ENCODE measurements at regions of chr3 and their contacts with region 1.

Region 1: DNA sequence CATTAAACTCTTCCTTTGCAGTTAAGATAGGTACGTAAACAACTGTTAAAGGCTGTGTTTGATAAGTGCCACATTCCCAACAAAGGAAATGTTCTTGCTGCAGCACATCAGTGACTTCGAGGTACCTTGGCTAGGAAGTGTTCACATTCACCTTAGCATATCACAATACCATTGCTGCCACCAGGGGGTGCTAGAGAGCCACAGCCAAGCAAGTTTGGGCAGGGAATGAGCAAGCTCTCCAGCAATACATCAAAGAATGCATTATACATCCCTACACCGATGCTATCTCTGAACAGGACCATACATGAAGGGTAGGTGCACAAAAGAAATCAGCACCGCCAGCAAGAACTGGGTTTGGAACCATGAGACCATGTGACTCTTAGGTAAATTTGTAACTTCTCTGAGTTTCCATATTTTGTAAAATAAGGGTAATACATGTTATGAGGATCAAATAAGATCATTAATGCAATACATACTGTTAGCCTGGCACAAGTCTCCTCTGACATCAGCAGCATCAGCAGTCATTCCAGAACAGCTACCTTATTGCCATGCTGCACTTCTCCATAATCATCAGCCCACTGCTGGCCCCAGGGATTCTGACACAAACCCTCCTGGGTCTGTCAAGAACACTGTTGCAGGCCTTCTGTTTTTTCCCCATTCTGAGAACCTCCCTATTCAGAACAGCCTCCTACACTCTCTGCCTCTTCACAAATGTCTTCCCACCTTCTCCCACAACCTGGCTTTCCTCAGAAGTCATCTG is 37.6 kb downstream of the RYK start:
- DNase-seq: peak; percentile 52 to 97 (median 83)
- ATAC-seq: peak; percentile 90 to 97 (median 94)
- H3K4me3 ChIP-seq: no peak overlapping the region
- H3K27ac ChIP-seq: no peak overlapping the region
- H3K4me1 ChIP-seq: no peaks in the 10 kb centered on the region
- H3K27me3 ChIP-seq: no peaks in the 10 kb centered on the region
- CTCF ChIP-seq: peak; percentile 87 to 98 (median 96)

Region 2: GRCh38 chr3:133927540-133928066 is 285.5 kb before region 1 on chr3:
- intact Hi-C with region 1: loop called in 1 of 3 experiments (anchors 10 kb)
- DNase-seq: peak in 5 of 6 donors; percentile 37 to 90 (median 52)
- ATAC-seq: peak; percentile 88 to 93 (median 90)
- H3K4me3 ChIP-seq: peak overlapping the region; percentile 34 to 69 (median 56)
- H3K27ac ChIP-seq: no peak overlapping the region
- H3K4me1 ChIP-seq: peaks cover 0 to 3% (median 0%) of the 10 kb centered on the region in 3 donors
- H3K27me3 ChIP-seq: no peaks in the 10 kb centered on the region
- CTCF ChIP-seq: peak; percentile 61 to 80 (median 74)

Region 3: GRCh38 chr3:134299185-134299887 is 86.2 kb after region 1 on chr3:
- intact Hi-C with region 1: loop called in 2 of 3 experiments (anchors 5 to 10 kb)
- DNase-seq: no peak
- ATAC-seq: peak; percentile 58 to 77 (median 74)
- H3K4me3 ChIP-seq: no peak overlapping the region
- H3K27ac ChIP-seq: no peak overlapping the region
- H3K4me1 ChIP-seq: peaks cover 0 to 4% (median 0%) of the 10 kb centered on the region in 3 donors
- H3K27me3 ChIP-seq: no peaks in the 10 kb centered on the region
- CTCF ChIP-seq: no peak

Region 4: DNA sequence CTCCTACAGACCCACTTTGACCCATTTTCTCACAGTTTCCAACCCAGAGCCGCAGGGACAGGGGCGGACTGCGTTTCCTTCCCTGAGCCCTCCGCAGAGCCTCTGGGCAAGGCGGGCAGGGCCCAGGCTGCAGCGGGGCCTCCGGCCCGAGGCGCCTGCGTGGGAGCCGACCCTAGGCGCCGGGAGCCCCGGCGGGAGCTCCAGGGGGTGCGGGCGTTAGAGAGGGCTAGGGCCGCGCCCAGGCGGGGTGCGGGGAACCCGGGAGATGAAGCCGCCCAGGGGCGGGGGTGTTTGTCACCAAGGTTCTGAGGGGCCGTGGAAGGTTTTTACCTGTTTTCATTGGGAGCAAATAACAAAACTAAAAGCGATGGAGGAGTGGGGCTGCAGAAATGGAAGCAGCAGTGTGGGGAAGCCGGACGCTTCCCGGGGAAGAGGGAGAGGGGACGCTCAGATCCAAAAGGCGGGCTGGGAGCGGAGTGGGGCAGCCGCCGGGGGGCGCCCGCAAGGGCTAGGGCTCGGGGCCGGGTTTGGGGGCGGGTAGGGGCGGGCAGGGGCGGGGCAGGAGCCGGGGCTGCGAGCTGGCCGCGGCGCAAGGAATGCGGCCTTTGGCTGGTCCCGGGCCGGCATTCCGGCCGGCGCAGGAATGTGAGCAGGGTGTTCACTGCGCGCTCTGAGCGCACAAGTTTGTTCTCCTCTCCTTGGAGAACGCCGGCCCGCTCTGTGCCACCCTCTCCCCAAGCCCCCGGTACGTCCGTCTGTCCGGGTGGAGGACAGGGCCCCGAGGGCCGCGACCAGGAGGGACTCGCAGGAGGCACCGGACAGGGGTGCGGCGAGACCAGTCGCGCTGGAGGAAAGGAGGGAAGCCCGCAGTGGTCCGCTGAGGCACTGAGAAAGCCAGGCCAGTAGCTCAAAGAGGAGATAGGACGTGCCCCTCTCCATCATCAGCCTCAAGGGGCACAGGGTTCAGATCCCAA is 100.1 kb after region 1 on chr3:
- intact Hi-C with region 1: no loop called
- DNase-seq: peak; percentile 59 to 88 (median 74)
- ATAC-seq: peak; percentile 69 to 73 (median 69)
- H3K4me3 ChIP-seq: peak overlapping the region; percentile 13 to 47 (median 34)
- H3K27ac ChIP-seq: peak overlapping the region; percentile 71 to 87 (median 81)
- H3K4me1 ChIP-seq: peaks cover 0 to 13% (median 8%) of the 10 kb centered on the region in 3 donors
- H3K27me3 ChIP-seq: no peaks in the 10 kb centered on the region
- CTCF ChIP-seq: peak in 1 of 4 donors; percentile 17

Region 5: DNA sequence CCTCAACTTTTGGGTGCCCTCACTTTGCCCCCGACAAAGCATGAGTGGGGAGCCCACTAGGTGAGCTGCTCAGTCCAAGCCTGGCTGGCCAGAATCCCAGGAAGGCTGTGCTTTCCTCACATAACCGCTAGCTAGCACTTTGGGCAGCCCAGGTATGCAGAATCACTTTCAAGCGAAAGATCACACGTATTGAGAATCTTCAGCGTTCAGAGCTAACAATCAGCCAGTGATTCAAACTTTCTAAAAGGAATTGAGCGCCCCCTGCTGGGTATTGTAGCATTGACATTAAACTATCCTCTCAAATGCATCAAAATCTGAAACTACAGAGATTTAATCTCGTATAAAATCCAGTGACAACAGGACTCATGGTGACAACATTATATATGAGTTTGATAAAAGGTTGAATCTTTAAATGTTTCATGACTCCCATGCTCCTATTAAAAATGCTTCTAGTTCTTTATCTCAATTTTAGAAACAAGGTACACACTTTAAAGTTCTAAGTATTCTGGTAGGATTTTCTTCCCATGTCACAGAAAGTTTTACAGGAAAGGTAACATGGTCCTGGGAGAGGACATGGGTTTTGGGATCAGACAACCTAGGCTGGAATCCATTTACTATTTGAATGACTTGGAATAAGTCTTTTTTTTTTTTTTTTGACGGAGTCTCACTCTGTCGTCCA is 260.9 kb after region 1 on chr3:
- intact Hi-C with region 1: loop called in 1 of 3 experiments (anchors 10 kb)
- DNase-seq: peak in 5 of 6 donors; percentile 52 to 78 (median 63)
- ATAC-seq: peak; percentile 64 to 91 (median 82)
- H3K4me3 ChIP-seq: no peak overlapping the region
- H3K27ac ChIP-seq: no peak overlapping the region
- H3K4me1 ChIP-seq: peaks cover 0 to 3% (median 0%) of the 10 kb centered on the region in 3 donors
- H3K27me3 ChIP-seq: no peaks in the 10 kb centered on the region
- CTCF ChIP-seq: peak; percentile 65 to 78 (median 68)